Heart right ventricle (tissue), 16 donors: ENCODE measurements at regions of chr2 and their contacts with region 1.

Region 1: GRCh38 chr2:217510771-217511291 is 492.0 kb downstream of the TNS1 start:
- DNase-seq: peak; percentile 9 to 79
- ATAC-seq: peak; percentile 87 to 94 (median 93)
- H3K4me3 ChIP-seq: peak overlapping the region in 1 of 10 donors; percentile 11
- H3K27ac ChIP-seq: peak overlapping the region in 2 of 10 donors; percentile 30 to 35
- H3K4me1 ChIP-seq: peaks cover 0 to 26% (median 8%) of the 10 kb centered on the region in 9 donors
- H3K27me3 ChIP-seq: no peaks in the 10 kb centered on the region
- CTCF ChIP-seq: peak; percentile 62 to 89 (median 68)

Region 2: GRCh38 chr2:216687646-216688045 is 823.2 kb before region 1 on chr2:
- intact Hi-C with region 1: loop called in 9 of 10 experiments (anchors 2 to 5 kb)
- DNase-seq: no peak
- ATAC-seq: no peak
- H3K4me3 ChIP-seq: no peak overlapping the region
- H3K27ac ChIP-seq: peak overlapping the region in 1 of 10 donors; percentile 2
- H3K4me1 ChIP-seq: peaks cover 11 to 90% (median 62%) of the 10 kb centered on the region in 9 donors
- H3K27me3 ChIP-seq: peaks cover 0 to 49% (median 0%) of the 10 kb centered on the region in 7 donors
- CTCF ChIP-seq: peak in 7 of 9 donors; percentile 8 to 41 (median 29)

Region 3: DNA sequence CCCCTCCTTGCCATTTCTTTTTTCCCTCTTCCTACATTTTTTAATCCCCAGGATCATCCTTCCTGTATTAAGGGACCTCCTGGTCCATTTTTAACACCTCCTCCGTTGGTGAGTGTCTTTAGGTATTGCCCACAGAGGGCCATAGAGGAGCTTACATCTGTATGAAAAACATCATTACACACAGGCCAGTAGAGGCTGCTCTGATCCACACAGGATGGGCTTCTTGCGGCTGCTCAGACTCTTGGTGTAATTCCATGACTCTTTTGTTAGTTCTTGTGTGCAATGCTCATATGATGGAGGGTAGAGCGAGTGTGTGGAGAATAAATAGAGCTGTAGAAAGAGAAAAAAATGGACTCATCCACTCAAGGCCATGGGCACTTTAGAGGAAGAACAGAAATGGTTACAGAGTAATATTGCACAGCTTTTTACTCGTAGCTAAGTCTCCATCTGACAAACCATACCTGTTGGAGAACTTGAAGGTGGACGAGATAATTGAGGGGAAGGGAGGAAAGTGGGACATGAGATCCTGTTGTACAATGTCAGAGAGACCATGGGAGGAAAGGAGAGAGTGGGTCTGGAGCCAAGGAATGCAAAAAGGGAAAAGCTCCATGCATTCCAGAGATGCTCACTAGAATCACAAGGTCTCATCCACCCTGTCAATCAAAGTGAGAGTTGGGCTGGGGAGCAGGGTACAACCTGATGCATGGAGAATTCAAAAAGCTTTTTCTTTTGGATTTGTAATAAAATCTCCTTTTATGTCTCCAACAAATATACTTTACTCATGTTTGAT is 521.3 kb before region 1 on chr2:
- intact Hi-C with region 1: loop called in 3 of 10 experiments (anchors 5 to 10 kb)
- DNase-seq: no peak
- ATAC-seq: peak in 3 of 8 donors; percentile 23 to 53 (median 26)
- H3K4me3 ChIP-seq: no peak overlapping the region
- H3K27ac ChIP-seq: no peak overlapping the region
- H3K4me1 ChIP-seq: peaks cover 0 to 37% (median 8%) of the 10 kb centered on the region in 9 donors
- H3K27me3 ChIP-seq: no peaks in the 10 kb centered on the region
- CTCF ChIP-seq: peak in 4 of 9 donors; percentile 9 to 27 (median 25)

Region 4: GRCh38 chr2:217166241-217166850 is 344.5 kb before region 1 on chr2:
- intact Hi-C with region 1: loop called in 8 of 10 experiments (anchors 5 to 10 kb)
- DNase-seq: peak in 1 of 2 donors; percentile 41
- ATAC-seq: peak; percentile 43 to 83 (median 69)
- H3K4me3 ChIP-seq: no peak overlapping the region
- H3K27ac ChIP-seq: no peak overlapping the region
- H3K4me1 ChIP-seq: peaks cover 0 to 23% (median 5%) of the 10 kb centered on the region in 9 donors
- H3K27me3 ChIP-seq: peaks cover 0 to 74% (median 0%) of the 10 kb centered on the region in 7 donors
- CTCF ChIP-seq: peak; percentile 42 to 78 (median 64)

Region 5: GRCh38 chr2:217393585-217394032 is 117.2 kb before region 1 on chr2:
- intact Hi-C with region 1: no loop called
- DNase-seq: peak; percentile 50 to 79
- ATAC-seq: peak; percentile 84 to 97 (median 94)
- H3K4me3 ChIP-seq: no peak overlapping the region
- H3K27ac ChIP-seq: peak overlapping the region in 6 of 10 donors; percentile 53 to 79 (median 72)
- H3K4me1 ChIP-seq: peaks cover 3 to 41% (median 20%) of the 10 kb centered on the region in 9 donors
- H3K27me3 ChIP-seq: no peaks in the 10 kb centered on the region
- CTCF ChIP-seq: no peak

Region 6: GRCh38 chr2:217434181-217434975 is 76.5 kb before region 1 on chr2:
- intact Hi-C with region 1: loop called in 1 of 10 experiments (anchors 5 kb)
- DNase-seq: peak; percentile 77 to 91
- ATAC-seq: peak; percentile 96 to 98 (median 98)
- H3K4me3 ChIP-seq: peak overlapping the region in 5 of 10 donors; percentile 12 to 31 (median 28)
- H3K27ac ChIP-seq: peak overlapping the region; percentile 8 to 77 (median 60)
- H3K4me1 ChIP-seq: peaks cover 0 to 80% (median 43%) of the 10 kb centered on the region in 9 donors
- H3K27me3 ChIP-seq: no peaks in the 10 kb centered on the region
- CTCF ChIP-seq: peak in 1 of 9 donors; percentile 19

Region 7: GRCh38 chr2:217713395-217714286 is 202.8 kb after region 1 on chr2:
- intact Hi-C with region 1: loop called in 7 of 10 experiments (anchors 5 to 10 kb)
- DNase-seq: peak; percentile 80 to 82
- ATAC-seq: peak; percentile 76 to 88 (median 84)
- H3K4me3 ChIP-seq: no peak overlapping the region
- H3K27ac ChIP-seq: peak overlapping the region in 9 of 10 donors; percentile 12 to 82 (median 56)
- H3K4me1 ChIP-seq: peaks cover 0 to 26% (median 20%) of the 10 kb centered on the region in 9 donors
- H3K27me3 ChIP-seq: no peaks in the 10 kb centered on the region
- CTCF ChIP-seq: peak; percentile 86 to 99 (median 98)

Region 8: DNA sequence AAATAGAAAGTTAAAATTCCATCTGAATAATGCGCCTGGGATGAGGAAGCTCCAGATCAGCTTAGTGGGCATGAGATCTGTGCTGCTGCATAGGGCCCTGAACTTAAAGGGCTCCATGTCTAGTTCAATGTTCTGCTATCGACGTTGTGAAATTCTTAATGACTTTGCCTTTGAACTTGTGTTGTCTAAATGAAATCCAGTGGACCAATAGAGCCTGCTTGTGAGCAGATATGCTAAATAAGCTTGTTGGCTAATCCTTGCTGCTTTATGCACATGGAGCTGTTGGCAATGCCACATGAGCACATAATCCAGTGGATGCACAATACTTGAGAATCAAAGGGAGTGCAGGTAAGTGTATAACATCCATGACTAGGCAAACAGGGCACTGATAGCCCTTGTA is 263.4 kb after region 1 on chr2:
- intact Hi-C with region 1: no loop called
- DNase-seq: no peak
- ATAC-seq: no peak
- H3K4me3 ChIP-seq: no peak overlapping the region
- H3K27ac ChIP-seq: no peak overlapping the region
- H3K4me1 ChIP-seq: no peaks in the 10 kb centered on the region
- H3K27me3 ChIP-seq: no peaks in the 10 kb centered on the region
- CTCF ChIP-seq: no peak